Esophagus squamous epithelium (tissue), 5 donors: ENCODE measurements at regions of chr2 and their contacts with region 1.

Region 1: GRCh38 chr2:219537657-219538488 is 5.7 kb downstream of the CHPF start:
- DNase-seq: no peak
- H3K4me3 ChIP-seq: no peak overlapping the region
- H3K27ac ChIP-seq: no peak overlapping the region
- H3K4me1 ChIP-seq: peaks cover 13 to 35% (median 18%) of the 10 kb centered on the region in 3 donors
- H3K27me3 ChIP-seq: peaks cover 0 to 62% (median 0%) of the 10 kb centered on the region in 4 donors
- CTCF ChIP-seq: no peak
- POLR2A ChIP-seq: no peak

Region 2: DNA sequence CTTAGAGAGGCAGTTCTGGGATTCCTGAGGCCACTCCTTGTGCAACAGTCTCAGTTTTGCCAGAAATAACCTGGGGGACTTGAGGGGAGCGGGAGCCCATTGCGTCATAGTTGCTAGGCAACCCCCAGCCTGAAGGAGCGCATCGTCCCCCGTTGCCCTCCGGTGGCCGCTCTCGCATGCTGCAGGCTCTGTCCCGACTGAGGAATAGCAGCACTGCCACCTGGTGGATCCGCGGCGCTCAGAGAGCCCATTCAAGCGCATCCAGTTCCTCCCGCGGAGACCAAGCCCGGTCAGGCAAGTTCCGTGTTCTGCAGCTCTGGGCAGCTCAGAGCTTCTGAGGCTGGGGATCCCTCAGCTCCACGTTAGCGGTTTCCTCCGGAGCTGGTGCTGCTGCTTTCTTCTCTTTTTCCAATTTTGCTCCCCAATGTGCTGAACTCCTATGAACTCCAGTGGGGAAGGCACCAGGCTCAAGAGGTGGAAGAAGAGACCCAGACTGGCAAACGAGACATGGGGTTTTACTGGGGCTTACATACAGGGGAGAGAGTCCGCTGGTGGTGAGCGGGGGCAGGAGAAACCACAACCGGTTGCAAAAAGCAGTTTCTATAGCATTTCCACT is 104.7 kb after region 1 on chr2:
- intact Hi-C with region 1: loop called (anchors 5 kb)
- DNase-seq: peak; percentile 64
- H3K4me3 ChIP-seq: no peak overlapping the region
- H3K27ac ChIP-seq: peak overlapping the region in 3 of 4 donors; percentile 42 to 61 (median 51)
- H3K4me1 ChIP-seq: peaks cover 4 to 33% (median 19%) of the 10 kb centered on the region in 3 donors
- H3K27me3 ChIP-seq: no peaks in the 10 kb centered on the region
- CTCF ChIP-seq: peak; percentile 93 to 100 (median 98)
- POLR2A ChIP-seq: no peak